ENCODE measurements at regions of chr3 and their contacts with region 1.

Region 1: DNA sequence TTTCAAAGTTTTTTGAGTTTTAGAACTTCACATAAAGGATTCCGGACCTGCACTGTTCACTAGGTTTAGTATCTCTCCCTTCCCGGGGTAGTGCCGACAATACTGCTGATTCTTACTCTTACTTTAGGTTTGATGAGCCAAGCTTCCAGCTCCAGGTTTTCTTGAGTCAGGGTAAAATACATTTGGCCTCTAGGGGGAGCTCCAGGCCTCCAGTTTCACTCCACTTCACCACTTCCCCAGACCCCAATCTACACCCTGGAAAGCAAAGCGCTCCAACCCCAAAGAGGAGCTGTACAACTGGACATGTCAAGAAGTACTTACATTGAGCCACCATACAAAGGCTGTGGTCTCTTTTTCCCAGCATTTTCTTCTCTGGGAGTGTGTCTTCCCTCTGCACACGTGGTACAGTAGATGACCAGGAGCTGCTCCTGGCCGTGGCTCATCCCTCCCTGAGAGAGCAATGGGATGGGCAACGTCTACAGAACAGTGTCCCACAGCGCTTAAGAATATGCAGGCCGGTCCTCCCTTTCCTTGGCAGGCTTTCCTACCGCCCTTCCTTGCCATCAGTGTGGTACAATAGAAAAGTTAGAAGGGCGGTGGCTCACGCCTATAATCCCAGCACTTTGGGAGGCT is 93.9 kb upstream of the CCDC80 start:
- DNase-seq: peak; percentile 83
- ATAC-seq: peak; percentile 75
- H3K4me3 Mint-ChIP-seq: no peak overlapping the region
- H3K27ac Mint-ChIP-seq: no peak overlapping the region
- H3K4me1 Mint-ChIP-seq: peaks cover 45% of the 10 kb centered on the region
- H3K27me3 Mint-ChIP-seq: no peaks in the 10 kb centered on the region

Region 2: GRCh38 chr3:112653209-112653871 is 81.5 kb before region 1 on chr3:
- CTCF ChIA-PET with region 1: interaction called, 132 read pairs
- POLR2A ChIA-PET with region 1: no interaction called
- DNase-seq: no peak
- ATAC-seq: no peak
- H3K4me3 Mint-ChIP-seq: no peak overlapping the region
- H3K27ac Mint-ChIP-seq: no peak overlapping the region
- H3K4me1 Mint-ChIP-seq: peaks cover 18% of the 10 kb centered on the region
- H3K27me3 Mint-ChIP-seq: peaks cover 9% of the 10 kb centered on the region

Region 3: DNA sequence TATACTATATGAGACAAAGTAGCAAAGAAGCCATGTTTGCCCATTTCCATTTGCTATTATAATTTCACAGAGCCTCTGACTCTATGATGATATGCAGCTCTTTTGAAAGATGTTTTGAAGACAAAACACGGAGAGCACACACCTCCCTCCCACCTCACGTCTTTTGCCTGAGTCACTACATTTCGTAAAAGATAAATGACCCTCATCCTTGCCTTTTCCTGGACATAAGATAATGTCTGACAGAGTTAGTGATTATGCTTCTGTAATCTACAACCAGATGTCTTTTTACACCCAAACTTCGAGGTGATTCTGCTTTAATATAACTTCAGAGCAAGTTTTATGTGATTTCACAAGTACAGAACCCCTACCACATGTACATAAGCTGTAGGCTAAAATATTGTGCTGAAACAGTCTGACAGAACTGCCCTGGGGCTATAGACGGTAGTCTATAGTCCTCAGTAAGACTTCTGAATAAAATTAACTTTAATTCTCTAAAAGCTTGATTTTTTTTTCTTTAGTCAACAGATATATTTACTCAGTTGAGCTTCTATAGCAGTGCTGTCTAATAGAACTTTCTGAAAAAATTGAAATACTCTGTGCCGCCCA is 11.9 kb after region 1 on chr3:
- CTCF ChIA-PET with region 1: interaction called, 22 read pairs
- POLR2A ChIA-PET with region 1: interaction called, 3 read pairs
- DNase-seq: no peak
- ATAC-seq: no peak
- H3K4me3 Mint-ChIP-seq: no peak overlapping the region
- H3K27ac Mint-ChIP-seq: no peak overlapping the region
- H3K4me1 Mint-ChIP-seq: no peaks in the 10 kb centered on the region
- H3K27me3 Mint-ChIP-seq: no peaks in the 10 kb centered on the region

Region 4: GRCh38 chr3:112814266-112814665 is 79.4 kb after region 1 on chr3:
- CTCF ChIA-PET with region 1: interaction called, 25 read pairs
- POLR2A ChIA-PET with region 1: no interaction called
- DNase-seq: no peak
- ATAC-seq: no peak
- H3K4me3 Mint-ChIP-seq: no peak overlapping the region
- H3K27ac Mint-ChIP-seq: no peak overlapping the region
- H3K4me1 Mint-ChIP-seq: peaks cover 24% of the 10 kb centered on the region
- H3K27me3 Mint-ChIP-seq: peaks cover 3% of the 10 kb centered on the region

Region 5: GRCh38 chr3:112865757-112866156 is 130.9 kb after region 1 on chr3:
- CTCF ChIA-PET with region 1: no interaction called
- POLR2A ChIA-PET with region 1: no interaction called
- DNase-seq: no peak
- ATAC-seq: no peak
- H3K4me3 Mint-ChIP-seq: no peak overlapping the region
- H3K27ac Mint-ChIP-seq: no peak overlapping the region
- H3K4me1 Mint-ChIP-seq: no peaks in the 10 kb centered on the region
- H3K27me3 Mint-ChIP-seq: peaks cover 8% of the 10 kb centered on the region

Region 6: GRCh38 chr3:112984485-112984884 is 249.7 kb after region 1 on chr3:
- CTCF ChIA-PET with region 1: interaction called, 118 read pairs
- POLR2A ChIA-PET with region 1: no interaction called
- DNase-seq: no peak
- ATAC-seq: peak; percentile 27
- H3K4me3 Mint-ChIP-seq: no peak overlapping the region
- H3K27ac Mint-ChIP-seq: no peak overlapping the region
- H3K4me1 Mint-ChIP-seq: peaks cover 14% of the 10 kb centered on the region
- H3K27me3 Mint-ChIP-seq: no peaks in the 10 kb centered on the region

Region 7: GRCh38 chr3:113019182-113020137 is 284.6 kb after region 1 on chr3:
- CTCF ChIA-PET with region 1: interaction called, 11 read pairs
- POLR2A ChIA-PET with region 1: no interaction called
- DNase-seq: peak; percentile 89
- ATAC-seq: peak; percentile 96
- H3K4me3 Mint-ChIP-seq: peak overlapping the region; percentile 82
- H3K27ac Mint-ChIP-seq: peak overlapping the region; percentile 91
- H3K4me1 Mint-ChIP-seq: peaks cover 36% of the 10 kb centered on the region
- H3K27me3 Mint-ChIP-seq: no peaks in the 10 kb centered on the region

Region 8: GRCh38 chr3:113157408-113158030 is 422.7 kb after region 1 on chr3:
- CTCF ChIA-PET with region 1: no interaction called
- POLR2A ChIA-PET with region 1: no interaction called
- DNase-seq: no peak
- ATAC-seq: no peak
- H3K4me3 Mint-ChIP-seq: no peak overlapping the region
- H3K27ac Mint-ChIP-seq: no peak overlapping the region
- H3K4me1 Mint-ChIP-seq: no peaks in the 10 kb centered on the region
- H3K27me3 Mint-ChIP-seq: peaks cover 3% of the 10 kb centered on the region

Measured in activated CD8-positive, alpha-beta T cell treated with anti-CD3 and anti-CD28 coated beads, Interleukin-2, amount 10 ng/mL, durations not matched to agents 7 days and 5 days (primary cell).